ENCODE measurements at regions of chrX and their contacts with region 1.

Region 1: GRCh38 chrX:79270401-79270800 is 96.7 kb downstream of the ITM2A start:
- DNase-seq: peak; percentile 44
- H3K4me3 Mint-ChIP-seq: no peak overlapping the region
- H3K27ac Mint-ChIP-seq: no peak overlapping the region
- H3K4me1 Mint-ChIP-seq: peaks cover 33% of the 10 kb centered on the region
- H3K27me3 Mint-ChIP-seq: no peaks in the 10 kb centered on the region

Region 2: DNA sequence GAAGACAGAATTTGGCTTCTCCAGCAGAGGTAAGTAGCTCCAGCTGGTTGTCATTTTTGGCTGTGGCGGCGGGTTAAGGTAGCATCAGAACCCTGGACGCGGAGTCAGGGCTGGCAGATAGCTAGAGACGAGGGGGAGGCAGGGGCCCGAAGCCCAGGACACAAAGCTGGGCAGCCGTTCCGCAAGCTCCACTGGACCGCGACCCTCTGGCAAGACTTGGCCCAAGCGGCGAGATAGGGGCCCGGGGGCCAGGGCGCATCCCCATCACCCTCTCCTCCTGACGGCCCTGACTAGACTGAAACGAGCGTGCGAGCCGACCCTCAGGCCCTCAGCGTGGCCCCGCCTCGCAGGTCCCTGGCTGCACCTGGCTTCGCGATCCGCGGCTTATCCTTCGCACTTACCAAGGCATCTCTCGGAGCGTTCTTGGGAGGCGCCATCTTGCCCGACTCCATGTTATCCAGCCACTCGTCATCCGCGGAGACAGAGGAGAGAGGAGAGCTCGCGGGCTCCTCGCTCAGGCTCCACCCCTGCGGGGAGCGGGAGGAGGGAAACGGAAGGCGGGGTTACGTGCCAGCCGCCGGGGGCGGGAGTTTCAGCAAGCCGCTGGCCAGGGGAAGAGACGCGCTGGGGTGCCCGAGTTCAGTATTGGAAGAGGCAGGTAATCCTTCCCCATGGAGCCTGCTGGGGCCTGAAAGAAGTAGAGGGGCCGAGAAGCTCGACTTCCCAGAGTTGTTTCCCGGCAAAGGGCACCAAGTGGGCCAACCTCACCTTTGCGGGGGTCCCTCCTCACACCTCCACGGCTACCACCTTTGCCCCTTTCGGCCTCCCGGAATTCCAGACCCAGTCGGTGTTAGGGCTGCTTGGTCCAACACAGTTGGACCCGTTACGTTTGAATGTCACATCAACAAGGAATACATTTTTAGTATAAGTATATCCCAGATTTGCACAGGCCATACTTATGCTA is 1131.0 kb before region 1 on chrX and contains the start of gene TAF9B:
- intact Hi-C with region 1: loop called (anchors 10 kb)
- DNase-seq: peak; percentile 78
- H3K4me3 Mint-ChIP-seq: peak within 1 kb of the TSS; percentile 92
- H3K27ac Mint-ChIP-seq: peak within 1 kb of the TSS; percentile 86
- H3K4me1 Mint-ChIP-seq: no peaks in the 10 kb centered on the region
- H3K27me3 Mint-ChIP-seq: no peaks in the 10 kb centered on the region
- total RNA-seq, gene TAF9B: 14.9 and 15.0 TPM in 2 replicates

Region 3: DNA sequence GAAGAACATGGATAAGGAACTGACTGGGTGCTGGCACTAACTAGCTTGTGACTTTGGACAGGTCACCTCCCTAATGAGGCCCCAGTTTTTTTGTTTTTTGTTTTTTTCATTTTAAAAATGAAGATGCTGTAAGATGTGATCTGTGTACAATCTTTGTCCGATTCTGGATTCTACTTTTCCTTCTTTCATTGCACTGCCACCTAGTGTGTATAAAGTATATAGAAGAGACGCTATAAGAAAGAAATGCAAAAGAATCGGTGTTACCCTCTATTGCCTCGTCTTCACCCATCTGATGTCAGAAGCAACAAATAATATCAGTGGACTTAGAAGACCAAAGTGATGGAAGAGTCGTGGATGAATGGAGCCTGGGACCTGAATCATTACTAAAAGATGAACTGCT is 383.9 kb before region 1 on chrX:
- intact Hi-C with region 1: loop called (anchors 2 kb)
- DNase-seq: no peak
- H3K4me3 Mint-ChIP-seq: no peak overlapping the region
- H3K27ac Mint-ChIP-seq: no peak overlapping the region
- H3K4me1 Mint-ChIP-seq: peaks cover 9% of the 10 kb centered on the region
- H3K27me3 Mint-ChIP-seq: no peaks in the 10 kb centered on the region

Region 4: DNA sequence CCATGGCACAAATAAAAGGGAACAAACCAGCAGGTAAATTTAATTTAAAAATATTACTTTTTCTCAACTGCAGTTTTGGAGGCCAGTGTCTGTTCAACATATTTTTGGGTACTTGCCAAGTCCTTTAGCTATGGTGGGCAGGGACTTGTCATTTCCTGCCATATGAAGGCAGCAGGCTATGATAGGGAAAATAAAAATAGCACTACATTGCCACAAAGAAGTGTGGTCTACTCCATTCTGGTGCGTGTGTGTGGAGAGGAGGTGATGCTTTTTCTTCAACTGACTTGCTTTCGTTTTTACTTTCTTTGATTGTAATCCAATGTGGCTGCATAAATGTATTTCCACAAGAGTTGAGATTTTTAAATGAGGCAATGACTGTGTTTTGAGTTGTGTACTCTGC is 108.7 kb before region 1 on chrX:
- intact Hi-C with region 1: loop called (anchors 1 kb)
- DNase-seq: peak; percentile 48
- H3K4me3 Mint-ChIP-seq: peak overlapping the region; percentile 89
- H3K27ac Mint-ChIP-seq: peak overlapping the region; percentile 99
- H3K4me1 Mint-ChIP-seq: peaks cover 53% of the 10 kb centered on the region
- H3K27me3 Mint-ChIP-seq: no peaks in the 10 kb centered on the region

Region 5: DNA sequence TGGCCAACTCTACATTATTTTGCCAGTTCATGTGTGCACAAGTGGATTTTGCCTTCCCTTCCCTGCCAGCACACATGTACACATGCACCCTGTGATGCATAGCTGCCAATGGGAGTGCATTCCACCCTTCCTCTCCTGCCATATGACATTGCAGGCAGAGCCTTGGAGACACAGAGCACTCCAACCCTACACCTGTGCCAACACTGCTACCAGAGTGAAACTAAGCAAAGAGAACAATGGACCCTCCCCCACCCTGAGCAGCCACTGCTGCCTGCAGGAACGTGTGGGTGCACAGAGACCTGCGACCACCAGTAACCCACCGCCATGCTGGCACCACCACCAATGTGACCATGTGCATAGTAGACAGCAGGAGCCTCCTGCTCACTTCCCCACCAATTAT is 18.3 kb after region 1 on chrX:
- intact Hi-C with region 1: loop called (anchors 2 kb)
- DNase-seq: no peak
- H3K4me3 Mint-ChIP-seq: no peak overlapping the region
- H3K27ac Mint-ChIP-seq: no peak overlapping the region
- H3K4me1 Mint-ChIP-seq: peaks cover 53% of the 10 kb centered on the region
- H3K27me3 Mint-ChIP-seq: no peaks in the 10 kb centered on the region

Region 6: GRCh38 chrX:79300821-79301220 is 30.4 kb after region 1 on chrX:
- intact Hi-C with region 1: no loop called
- DNase-seq: no peak
- H3K4me3 Mint-ChIP-seq: no peak overlapping the region
- H3K27ac Mint-ChIP-seq: no peak overlapping the region
- H3K4me1 Mint-ChIP-seq: no peaks in the 10 kb centered on the region
- H3K27me3 Mint-ChIP-seq: no peaks in the 10 kb centered on the region

Region 7: DNA sequence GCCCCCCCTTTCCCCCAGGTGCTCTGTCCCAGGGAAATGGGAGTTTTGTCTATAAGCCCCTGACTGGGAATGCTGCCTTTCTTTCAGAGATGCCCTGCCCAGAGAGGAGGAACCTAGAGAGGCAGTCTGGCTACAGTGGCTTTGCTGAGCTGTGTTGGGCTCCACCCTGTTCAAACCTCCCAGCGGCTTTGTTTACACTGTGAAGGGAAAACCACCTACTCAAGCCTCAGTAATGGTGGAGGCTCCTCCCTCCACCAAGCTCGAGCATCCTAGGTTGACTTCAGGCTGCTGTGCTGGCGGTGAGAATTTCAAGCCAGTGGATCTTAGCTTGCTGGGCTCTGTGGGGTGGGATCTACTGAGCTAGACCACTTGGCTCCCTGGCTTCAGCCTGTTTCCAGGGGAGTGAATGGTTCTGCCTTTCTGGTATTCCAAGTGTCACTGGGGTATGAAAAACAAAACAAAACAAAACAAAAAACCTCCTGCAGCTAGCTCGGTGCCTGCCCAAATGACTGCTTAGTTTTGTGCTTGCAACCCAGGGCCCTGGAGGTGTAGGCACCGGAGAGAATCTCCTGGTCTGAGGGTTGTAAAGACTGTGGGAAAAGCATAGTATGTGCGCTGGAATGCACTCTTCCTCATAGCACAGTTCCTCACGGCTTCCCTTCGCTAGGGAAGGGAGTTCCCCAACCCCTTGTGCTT is 55.0 kb after region 1 on chrX:
- intact Hi-C with region 1: no loop called
- DNase-seq: peak; percentile 24
- H3K4me3 Mint-ChIP-seq: peak overlapping the region; percentile 73
- H3K27ac Mint-ChIP-seq: peak overlapping the region; percentile 67
- H3K4me1 Mint-ChIP-seq: peaks cover 10% of the 10 kb centered on the region
- H3K27me3 Mint-ChIP-seq: no peaks in the 10 kb centered on the region

Region 8: GRCh38 chrX:79412972-79413371 is 142.6 kb after region 1 on chrX:
- intact Hi-C with region 1: loop called (anchors 1 kb)
- DNase-seq: no peak
- H3K4me3 Mint-ChIP-seq: peak overlapping the region; percentile 71
- H3K27ac Mint-ChIP-seq: peak overlapping the region; percentile 34
- H3K4me1 Mint-ChIP-seq: peaks cover 28% of the 10 kb centered on the region
- H3K27me3 Mint-ChIP-seq: no peaks in the 10 kb centered on the region

Measured in activated T-helper 1 cell treated with anti-CD3 and anti-CD28 coated beads, Interleukin-12 subunit alpha, Interleukin-12 subunit beta, Interleukin-2, Interleukin-4 antibody, amounts not matched to agents 30 ng/mL and 10 ng/mL and 1 ng/mL, durations not matched to agents 14 hours and 24 hours and 36 hours (primary cell).